ENCODE measurements at regions of chr9 and their contacts with region 1.

Region 1: DNA sequence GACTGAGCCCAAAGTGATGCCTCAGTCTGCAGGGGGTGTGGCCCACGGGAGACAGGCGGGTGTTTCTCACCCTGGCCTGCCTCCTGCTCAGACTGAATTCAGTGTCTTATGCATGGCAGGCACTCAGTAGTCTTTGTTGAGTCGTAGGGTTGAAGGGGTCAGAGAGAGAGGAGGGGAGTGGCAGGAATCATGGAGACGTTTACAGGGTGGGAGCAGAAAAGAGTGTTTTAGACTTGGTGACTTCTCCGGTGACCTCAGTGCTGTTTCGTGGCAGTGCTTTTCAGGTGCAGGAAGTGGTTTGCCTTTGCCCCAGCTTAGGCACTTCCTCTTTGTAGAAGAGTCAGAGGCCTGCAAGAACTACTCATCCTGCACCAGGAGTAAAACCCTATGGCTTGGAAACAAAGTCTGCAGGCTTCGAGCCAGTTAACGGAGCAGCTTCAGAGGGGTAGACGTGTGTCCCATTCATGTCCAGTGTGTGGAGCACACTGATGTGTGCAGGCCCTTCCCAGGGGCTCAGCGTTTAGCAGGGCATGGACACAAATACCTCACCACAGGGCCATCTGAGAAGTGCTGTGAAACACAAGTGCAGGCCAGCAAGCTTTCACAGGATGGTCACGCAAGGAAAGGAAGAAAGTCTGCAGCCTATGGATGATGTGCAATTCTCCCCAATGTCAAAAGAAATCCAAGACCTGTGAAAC is 24.5 kb upstream of the SEMA4D start:
- DNase-seq: peak; percentile 84 to 95 (median 86)
- H3K4me3 ChIP-seq: peak overlapping the region; percentile 19 to 30
- H3K4me3 Mint-ChIP-seq: peak overlapping the region; percentile 68 to 90 (median 78)
- H3K27ac ChIP-seq: peak overlapping the region; percentile 60
- H3K27ac Mint-ChIP-seq: peak overlapping the region; percentile 91 to 100 (median 98)
- H3K4me1 ChIP-seq: peaks cover 99% of the 10 kb centered on the region
- H3K4me1 Mint-ChIP-seq: peaks cover 73 to 98% (median 90%) of the 10 kb centered on the region in 4 donors
- H3K27me3 ChIP-seq: no peaks in the 10 kb centered on the region
- H3K27me3 Mint-ChIP-seq: no peaks in the 10 kb centered on the region

Region 2: GRCh38 chr9:89410641-89411350 is 111.6 kb before region 1 on chr9:
- CTCF ChIA-PET with region 1: no interaction called
- POLR2A ChIA-PET with region 1: interaction called, 7 read pairs
- intact Hi-C with region 1: loop called (anchors 1 kb)
- DNase-seq: peak in 4 of 5 donors; percentile 30 to 76 (median 32)
- H3K4me3 ChIP-seq: no peak overlapping the region
- H3K4me3 Mint-ChIP-seq: peak overlapping the region in 7 of 8 donors; percentile 58 to 84 (median 80)
- H3K27ac ChIP-seq: peak overlapping the region; percentile 52
- H3K27ac Mint-ChIP-seq: peak overlapping the region; percentile 86 to 95 (median 91)
- H3K4me1 ChIP-seq: peaks cover 100% of the 10 kb centered on the region
- H3K4me1 Mint-ChIP-seq: peaks cover 71 to 98% (median 82%) of the 10 kb centered on the region in 4 donors
- H3K27me3 ChIP-seq: no peaks in the 10 kb centered on the region
- H3K27me3 Mint-ChIP-seq: no peaks in the 10 kb centered on the region

Region 3: DNA sequence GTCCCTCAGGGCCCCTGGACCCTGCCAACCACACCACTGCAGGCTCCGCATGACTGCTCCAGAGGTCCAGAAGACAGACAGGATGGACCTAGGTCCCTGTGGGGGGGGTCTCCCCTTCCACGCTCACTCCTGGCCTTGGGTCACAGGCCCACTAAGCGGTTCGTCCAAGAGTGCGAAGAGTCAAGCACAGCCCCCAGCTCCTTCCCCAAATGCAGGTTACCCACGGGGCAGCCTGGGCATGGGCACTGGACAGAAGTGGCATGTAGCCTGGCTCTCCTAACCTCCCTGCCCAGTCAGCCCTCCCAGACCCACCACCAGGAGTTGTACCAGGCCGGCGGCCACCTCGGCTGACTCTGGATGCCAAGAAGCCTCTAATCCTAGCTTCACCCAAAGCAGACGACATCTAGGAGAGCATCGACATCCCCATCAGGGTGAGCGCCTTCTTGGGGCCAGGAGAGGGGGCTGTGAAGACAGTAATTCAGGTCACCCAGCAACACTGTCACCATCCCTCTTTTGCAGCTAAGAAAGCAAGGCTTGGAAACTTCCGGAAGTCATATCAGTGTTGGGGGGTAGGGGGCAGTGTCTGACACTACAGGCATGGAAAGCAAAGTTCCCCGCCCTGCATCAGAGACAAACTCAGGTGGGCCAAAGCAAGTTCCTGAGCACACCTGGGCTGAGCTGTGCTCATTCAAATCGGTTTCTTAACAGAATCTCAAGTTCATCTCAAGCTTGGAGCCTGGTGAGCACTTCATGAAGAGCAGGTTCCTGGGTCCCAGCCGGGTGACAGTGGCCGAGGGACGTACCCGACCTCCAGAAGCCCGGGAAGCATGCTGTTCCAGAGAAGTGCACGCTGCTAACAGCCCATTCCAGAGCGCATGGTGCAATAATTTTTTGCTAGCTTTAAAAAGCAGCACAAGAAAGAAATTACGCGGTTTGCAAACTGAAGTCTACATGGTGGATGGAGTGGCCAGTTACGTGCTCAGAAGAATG is 93.2 kb before region 1 on chr9:
- CTCF ChIA-PET with region 1: interaction called, 11 read pairs
- POLR2A ChIA-PET with region 1: interaction called, 6 read pairs
- intact Hi-C with region 1: no loop called
- DNase-seq: peak; percentile 66 to 86 (median 73)
- H3K4me3 ChIP-seq: no peak overlapping the region
- H3K4me3 Mint-ChIP-seq: peak overlapping the region in 5 of 8 donors; percentile 17 to 73 (median 53)
- H3K27ac ChIP-seq: peak overlapping the region; percentile 4
- H3K27ac Mint-ChIP-seq: peak overlapping the region; percentile 50 to 97 (median 86)
- H3K4me1 ChIP-seq: peaks cover 100% of the 10 kb centered on the region
- H3K4me1 Mint-ChIP-seq: peaks cover 62 to 100% (median 85%) of the 10 kb centered on the region in 4 donors
- H3K27me3 ChIP-seq: no peaks in the 10 kb centered on the region
- H3K27me3 Mint-ChIP-seq: no peaks in the 10 kb centered on the region

Region 4: DNA sequence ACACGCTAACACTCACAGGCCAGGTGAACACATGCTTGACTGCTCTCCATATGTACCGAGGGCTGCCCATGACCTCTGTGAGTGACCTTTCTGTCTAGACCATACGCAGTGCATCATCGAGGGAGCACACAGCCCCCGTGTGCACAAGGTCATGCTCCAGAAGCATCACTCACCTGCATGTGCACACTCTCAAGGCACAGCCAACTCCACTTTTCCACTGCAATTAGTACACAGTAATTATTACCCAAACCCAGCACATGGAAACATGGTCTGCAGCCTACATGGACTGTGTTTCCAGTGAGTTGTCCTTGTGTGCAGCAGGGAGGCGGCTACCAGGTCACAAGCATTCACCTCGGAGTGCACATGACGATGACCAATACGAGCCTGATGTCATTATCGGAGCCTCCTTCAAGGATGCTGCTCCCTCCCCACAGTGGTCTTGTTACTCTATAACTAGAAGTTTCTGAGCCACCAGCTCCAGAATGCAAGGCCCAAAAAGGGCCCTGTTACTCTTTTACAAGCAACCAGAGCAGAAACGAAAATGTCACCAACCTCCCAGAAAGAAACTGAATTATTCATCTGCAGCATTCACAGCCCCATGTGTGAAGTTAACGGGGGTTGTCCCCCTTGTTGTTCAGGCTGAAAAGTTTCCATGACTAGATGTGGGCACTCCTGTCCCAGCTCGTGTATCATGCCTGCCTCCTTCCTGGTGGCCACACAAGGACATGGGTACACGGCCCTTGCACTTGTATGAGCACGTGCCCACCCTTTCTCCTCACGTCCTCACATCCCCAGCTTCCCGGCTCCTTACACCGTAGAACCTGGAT is 55.7 kb before region 1 on chr9:
- CTCF ChIA-PET with region 1: interaction called, 4 read pairs
- POLR2A ChIA-PET with region 1: interaction called, 47 read pairs
- intact Hi-C with region 1: loop called (anchors 1 kb)
- DNase-seq: peak in 1 of 5 donors; percentile 73
- H3K4me3 ChIP-seq: peak overlapping the region; percentile 5 to 56
- H3K4me3 Mint-ChIP-seq: peak overlapping the region; percentile 78 to 93 (median 84)
- H3K27ac ChIP-seq: peak overlapping the region; percentile 73
- H3K27ac Mint-ChIP-seq: peak overlapping the region; percentile 92 to 100 (median 96)
- H3K4me1 ChIP-seq: peaks cover 100% of the 10 kb centered on the region
- H3K4me1 Mint-ChIP-seq: peaks cover 86 to 100% (median 94%) of the 10 kb centered on the region in 4 donors
- H3K27me3 ChIP-seq: no peaks in the 10 kb centered on the region
- H3K27me3 Mint-ChIP-seq: no peaks in the 10 kb centered on the region

Region 5: GRCh38 chr9:89483592-89484522 is 38.6 kb before region 1 on chr9:
- CTCF ChIA-PET with region 1: interaction called, 3 read pairs
- POLR2A ChIA-PET with region 1: interaction called, 38 read pairs
- intact Hi-C with region 1: no loop called
- DNase-seq: peak; percentile 66 to 83 (median 72)
- H3K4me3 ChIP-seq: peak overlapping the region; percentile 50 to 79
- H3K4me3 Mint-ChIP-seq: peak overlapping the region; percentile 92 to 100 (median 98)
- H3K27ac ChIP-seq: peak overlapping the region; percentile 58
- H3K27ac Mint-ChIP-seq: peak overlapping the region; percentile 74 to 99 (median 96)
- H3K4me1 ChIP-seq: peaks cover 89% of the 10 kb centered on the region
- H3K4me1 Mint-ChIP-seq: peaks cover 78 to 95% (median 88%) of the 10 kb centered on the region in 4 donors
- H3K27me3 ChIP-seq: no peaks in the 10 kb centered on the region
- H3K27me3 Mint-ChIP-seq: no peaks in the 10 kb centered on the region

Region 6: GRCh38 chr9:89497978-89498851 is 24.2 kb before region 1 on chr9 and contains the start of gene SEMA4D:
- CTCF ChIA-PET with region 1: interaction called, 9 read pairs
- POLR2A ChIA-PET with region 1: interaction called, 59 read pairs
- intact Hi-C with region 1: loop called (anchors 1 kb)
- DNase-seq: peak in 3 of 5 donors; percentile 28 to 68 (median 37)
- H3K4me3 ChIP-seq: peak within 1 kb of the TSS; percentile 89 to 98
- H3K4me3 Mint-ChIP-seq: peak within 1 kb of the TSS; percentile 94 to 100 (median 98)
- H3K27ac ChIP-seq: peak within 1 kb of the TSS; percentile 72
- H3K27ac Mint-ChIP-seq: peak within 1 kb of the TSS; percentile 94 to 98 (median 96)
- H3K4me1 ChIP-seq: peaks cover 86% of the 10 kb centered on the region
- H3K4me1 Mint-ChIP-seq: peaks cover 71 to 93% (median 81%) of the 10 kb centered on the region in 4 donors
- H3K27me3 ChIP-seq: no peaks in the 10 kb centered on the region
- H3K27me3 Mint-ChIP-seq: no peaks in the 10 kb centered on the region
- total RNA-seq, gene SEMA4D: 393 to 410 TPM

Region 7: DNA sequence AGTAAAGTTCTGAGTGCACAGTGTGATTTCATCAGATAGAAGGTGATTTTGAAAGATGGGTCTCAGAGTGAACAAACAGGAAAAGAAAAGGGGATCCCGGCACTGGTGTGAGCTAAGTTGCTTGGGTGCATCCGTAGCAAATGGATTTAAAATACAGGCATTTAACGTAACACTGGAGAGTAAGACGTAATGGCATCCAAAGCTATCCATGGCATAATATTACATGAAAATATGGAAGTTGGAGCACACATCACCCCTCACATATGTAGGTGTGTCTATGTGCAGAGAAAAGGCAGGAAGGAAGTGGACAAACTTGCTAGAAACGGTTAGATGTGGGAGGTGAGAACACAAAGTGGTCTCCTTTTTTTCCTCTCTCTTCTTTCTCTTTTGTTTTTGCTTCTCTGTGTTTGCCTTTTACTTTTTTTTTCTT is 13.8 kb after region 1 on chr9:
- CTCF ChIA-PET with region 1: interaction called, 8 read pairs
- POLR2A ChIA-PET with region 1: interaction called, 99 read pairs
- intact Hi-C with region 1: loop called (anchors 1 kb)
- DNase-seq: peak; percentile 54 to 76 (median 71)
- H3K4me3 ChIP-seq: peak overlapping the region in 1 of 2 donors; percentile 34
- H3K4me3 Mint-ChIP-seq: peak overlapping the region; percentile 72 to 84 (median 80)
- H3K27ac ChIP-seq: peak overlapping the region; percentile 23
- H3K27ac Mint-ChIP-seq: peak overlapping the region; percentile 58 to 93 (median 89)
- H3K4me1 ChIP-seq: peaks cover 89% of the 10 kb centered on the region
- H3K4me1 Mint-ChIP-seq: peaks cover 62 to 93% (median 84%) of the 10 kb centered on the region in 4 donors
- H3K27me3 ChIP-seq: no peaks in the 10 kb centered on the region
- H3K27me3 Mint-ChIP-seq: no peaks in the 10 kb centered on the region

Region 8: DNA sequence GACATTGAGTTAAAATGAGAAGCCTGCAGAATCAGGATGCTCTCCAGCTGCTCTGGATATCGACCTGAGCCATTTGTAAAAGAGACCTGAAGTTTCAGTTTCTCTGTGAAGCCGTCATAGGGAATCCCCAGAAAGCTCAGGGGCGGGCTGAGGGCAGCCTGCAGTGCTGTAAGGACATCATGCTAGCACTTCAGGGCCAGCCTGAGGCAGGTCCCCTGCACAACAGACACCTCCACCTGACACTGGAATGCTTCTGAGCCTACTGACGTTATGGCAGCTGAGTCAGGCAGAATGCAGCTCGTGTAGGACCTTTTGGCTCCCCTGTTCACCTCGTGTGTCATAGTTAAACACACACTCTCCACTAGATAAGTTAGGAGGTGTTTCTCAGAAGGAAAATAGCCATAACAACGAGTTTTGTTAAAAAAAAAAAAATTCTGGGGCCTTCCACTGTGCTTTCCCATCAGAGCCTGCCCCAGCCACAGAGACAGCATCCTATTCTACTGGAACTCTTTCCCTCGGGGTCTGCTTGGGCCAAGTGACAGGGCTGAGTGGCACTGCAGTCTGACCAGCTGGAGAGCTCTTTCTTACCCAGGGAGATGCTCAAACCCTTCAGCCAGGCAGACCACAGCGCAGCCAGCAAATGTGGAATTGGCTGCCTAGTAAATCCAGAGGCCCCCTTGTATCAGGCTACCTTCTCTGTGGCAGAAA is 765.3 kb after region 1 on chr9:
- CTCF ChIA-PET with region 1: no interaction called
- POLR2A ChIA-PET with region 1: no interaction called
- intact Hi-C with region 1: no loop called
- DNase-seq: peak in 3 of 5 donors; percentile 1 to 33 (median 2)
- H3K4me3 ChIP-seq: no peak overlapping the region
- H3K4me3 Mint-ChIP-seq: peak overlapping the region in 4 of 8 donors; percentile 0 to 51 (median 33)
- H3K27ac ChIP-seq: no peak overlapping the region
- H3K27ac Mint-ChIP-seq: peak overlapping the region in 1 of 7 donors; percentile 19
- H3K4me1 ChIP-seq: no peaks in the 10 kb centered on the region
- H3K4me1 Mint-ChIP-seq: peaks cover 0 to 4% (median 1%) of the 10 kb centered on the region in 4 donors
- H3K27me3 ChIP-seq: no peaks in the 10 kb centered on the region
- H3K27me3 Mint-ChIP-seq: peaks cover 1 to 2% of the 10 kb centered on the region in 2 donors